ENCODE measurements at regions of chr19 and their contacts with region 1.

Region 1: DNA sequence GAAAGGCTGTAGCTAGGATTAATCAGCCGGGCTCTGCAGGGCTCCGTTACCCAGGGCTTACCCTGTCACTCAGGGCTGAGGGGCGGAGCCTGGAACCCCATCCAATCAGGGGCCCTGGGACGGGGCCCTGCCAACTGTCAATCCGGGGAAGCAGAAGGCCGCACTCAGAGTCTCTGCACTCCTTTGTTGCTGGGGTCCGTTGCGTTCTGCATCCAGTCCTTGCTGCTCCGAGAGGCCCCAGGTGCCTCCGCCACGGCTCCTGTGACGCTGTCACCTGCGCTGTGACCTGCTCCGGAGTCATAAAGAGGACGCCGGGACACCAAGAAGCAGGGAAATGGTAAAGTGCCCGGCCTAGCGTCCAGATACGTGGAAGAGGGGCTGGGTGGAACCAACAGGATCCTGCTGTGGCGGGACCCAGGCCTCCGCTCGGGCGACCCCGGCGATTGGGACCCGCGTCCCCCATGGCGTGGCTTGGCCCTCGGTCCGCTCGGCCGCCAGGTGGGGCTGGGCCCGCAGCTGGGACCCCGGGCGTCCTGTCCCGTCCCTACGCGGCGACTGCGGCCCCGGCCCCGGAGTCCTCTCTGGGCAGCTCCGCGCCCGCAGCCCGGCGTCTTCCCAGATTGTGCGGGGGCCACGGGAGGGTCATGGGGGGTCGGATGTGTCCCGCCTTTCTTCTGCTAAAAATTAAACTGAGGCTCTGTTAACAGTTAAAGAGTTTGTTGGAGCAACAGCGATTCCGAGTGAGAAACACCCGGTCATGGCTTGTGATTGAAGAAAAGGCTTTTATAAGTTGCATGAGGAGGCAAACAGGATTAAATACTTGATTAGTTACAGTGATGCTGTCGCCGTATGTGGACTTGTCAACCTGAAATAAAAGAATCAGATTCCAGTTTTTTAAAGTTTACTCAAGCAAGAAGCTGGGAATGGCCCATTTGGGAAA is at the start of gene ZNF491:
- DNase-seq: peak; percentile 79 to 86
- ATAC-seq: peak; percentile 92 to 95
- H3K4me3 ChIP-seq: peak within 1 kb of the TSS; percentile 58 to 74 (median 70)
- H3K27ac ChIP-seq: peak within 1 kb of the TSS; percentile 74 to 84 (median 78)
- H3K4me1 ChIP-seq: peaks cover 16 to 17% of the 10 kb centered on the region in 2 donors
- H3K27me3 ChIP-seq: no peaks in the 10 kb centered on the region
- CTCF ChIP-seq: peak in 2 of 5 experiments; percentile 22 to 24
- POLR2A ChIP-seq: peak; percentile 53 to 79
- total RNA-seq, gene ZNF491: 0.92 to 1.8 (median 1.4) TPM

Region 2: GRCh38 chr19:11814029-11814699 is 15.5 kb after region 1 on chr19 and contains the start of gene ZNF440:
- in situ Hi-C with region 1: no loop called
- intact Hi-C with region 1: loop called (anchors 1 kb)
- DNase-seq: peak; percentile 91 to 93
- ATAC-seq: peak; percentile 99
- H3K4me3 ChIP-seq: peak within 1 kb of the TSS; percentile 76 to 97 (median 81)
- H3K27ac ChIP-seq: peak within 1 kb of the TSS; percentile 80 to 96 (median 88)
- H3K4me1 ChIP-seq: peaks cover 7 to 10% of the 10 kb centered on the region in 2 donors
- H3K27me3 ChIP-seq: no peaks in the 10 kb centered on the region
- CTCF ChIP-seq: peak in 1 of 5 experiments; percentile 15
- POLR2A ChIP-seq: peak; percentile 71 to 89
- total RNA-seq, gene ZNF440: 2.5 to 5.5 (median 4.2) TPM

Region 3: GRCh38 chr19:11868188-11868587 is 69.5 kb after region 1 on chr19:
- in situ Hi-C with region 1: no loop called
- intact Hi-C with region 1: no loop called
- DNase-seq: no peak
- ATAC-seq: no peak
- H3K4me3 ChIP-seq: no peak overlapping the region
- H3K27ac ChIP-seq: no peak overlapping the region
- H3K4me1 ChIP-seq: no peaks in the 10 kb centered on the region
- H3K27me3 ChIP-seq: no peaks in the 10 kb centered on the region
- CTCF ChIP-seq: no peak
- POLR2A ChIP-seq: no peak

Region 4: DNA sequence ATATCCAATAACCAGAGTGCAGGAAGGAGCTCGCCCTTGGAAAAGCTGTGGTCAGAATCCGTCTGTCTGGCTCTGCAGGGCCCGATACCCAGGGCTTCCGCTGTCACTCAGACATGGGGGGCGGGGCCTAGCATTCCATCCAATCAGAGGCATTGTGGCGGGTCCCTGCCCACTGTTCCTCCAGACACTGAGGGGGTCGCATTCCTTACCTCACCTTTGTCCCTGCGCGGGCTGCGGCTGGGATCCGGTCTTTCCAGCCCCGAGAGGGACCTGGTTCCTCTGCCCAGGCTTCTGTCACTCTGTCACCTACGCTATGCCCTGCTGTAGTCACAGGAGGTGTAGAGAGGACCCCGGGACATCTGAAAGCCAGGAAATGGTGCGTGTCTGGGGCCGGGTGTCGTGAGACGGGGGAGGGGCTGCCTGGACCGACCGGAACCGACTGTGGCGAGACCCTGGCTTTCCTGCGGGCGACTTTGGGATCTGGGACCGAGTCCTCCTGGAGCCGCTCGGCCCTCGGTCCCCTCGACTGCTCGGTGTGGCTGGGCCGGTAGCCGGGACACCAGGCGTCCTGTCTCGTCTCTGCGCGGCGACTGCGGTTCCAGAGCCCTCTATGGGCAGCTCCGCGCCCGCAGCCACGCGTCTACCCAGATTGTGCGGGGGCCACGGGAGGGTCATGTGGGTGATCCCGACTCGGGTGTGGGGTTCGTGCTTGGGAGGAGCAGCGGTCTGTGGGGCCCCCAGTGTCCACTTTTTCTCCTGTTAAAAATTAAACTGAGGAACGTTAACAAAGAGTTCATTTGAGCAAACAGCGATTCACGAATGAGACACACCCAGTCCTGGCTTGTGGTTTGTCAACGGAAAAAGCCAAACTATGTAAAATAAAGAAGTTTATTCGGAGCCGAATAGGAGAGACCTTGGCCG is 89.2 kb after region 1 on chr19 and contains the start of gene ZNF69:
- in situ Hi-C with region 1: no loop called
- intact Hi-C with region 1: loop called (anchors 5 kb)
- DNase-seq: peak; percentile 67 to 70
- ATAC-seq: peak; percentile 94 to 95
- H3K4me3 ChIP-seq: peak within 1 kb of the TSS; percentile 58 to 82 (median 76)
- H3K27ac ChIP-seq: peak within 1 kb of the TSS; percentile 75 to 82 (median 80)
- H3K4me1 ChIP-seq: peaks cover 8% of the 10 kb centered on the region in 2 donors
- H3K27me3 ChIP-seq: no peaks in the 10 kb centered on the region
- CTCF ChIP-seq: peak in 4 of 5 experiments; percentile 18 to 54 (median 34)
- POLR2A ChIP-seq: no peak
- total RNA-seq, gene ZNF69: 0.22 to 2.8 (median 1.8) TPM

Region 5: GRCh38 chr19:11987405-11988281 is 189.0 kb after region 1 on chr19:
- in situ Hi-C with region 1: loop called in 3 of 4 experiments (anchors 5 to 10 kb)
- intact Hi-C with region 1: loop called (anchors 1 kb)
- DNase-seq: peak; percentile 93 to 96
- ATAC-seq: peak; percentile 89 to 90
- H3K4me3 ChIP-seq: peak overlapping the region; percentile 73 to 94 (median 91)
- H3K27ac ChIP-seq: peak overlapping the region; percentile 87 to 96 (median 94)
- H3K4me1 ChIP-seq: peaks cover 0 to 6% of the 10 kb centered on the region in 2 donors
- H3K27me3 ChIP-seq: no peaks in the 10 kb centered on the region
- CTCF ChIP-seq: no peak
- POLR2A ChIP-seq: peak; percentile 74 to 83

Region 6: GRCh38 chr19:12064590-12065538 is 266.2 kb after region 1 on chr19 and contains the start of gene ZNF844:
- in situ Hi-C with region 1: no loop called
- intact Hi-C with region 1: loop called (anchors 5 kb)
- DNase-seq: peak; percentile 93 to 97
- ATAC-seq: peak; percentile 96 to 97
- H3K4me3 ChIP-seq: peak within 1 kb of the TSS; percentile 63 to 92 (median 82)
- H3K27ac ChIP-seq: peak within 1 kb of the TSS; percentile 85 to 97 (median 92)
- H3K4me1 ChIP-seq: peaks cover 0 to 4% of the 10 kb centered on the region in 2 donors
- H3K27me3 ChIP-seq: no peaks in the 10 kb centered on the region
- CTCF ChIP-seq: no peak
- POLR2A ChIP-seq: peak; percentile 80 to 95
- total RNA-seq, gene ZNF844: 2.2 to 5.7 (median 4.9) TPM

Region 7: GRCh38 chr19:12666265-12667048 is 867.8 kb after region 1 on chr19 and contains the starts of genes MAN2B1 and WDR83:
- in situ Hi-C with region 1: no loop called
- intact Hi-C with region 1: loop called (anchors 5 kb)
- DNase-seq: peak; percentile 37 to 71
- ATAC-seq: peak; percentile 73 to 77
- H3K4me3 ChIP-seq: peak within 1 kb of the TSS; percentile 89 to 99 (median 96)
- H3K27ac ChIP-seq: peak within 1 kb of the TSS; percentile 82 to 99 (median 98)
- H3K4me1 ChIP-seq: peaks cover 33 to 36% of the 10 kb centered on the region in 2 donors
- H3K27me3 ChIP-seq: no peaks in the 10 kb centered on the region
- CTCF ChIP-seq: no peak
- POLR2A ChIP-seq: peak in 1 of 2 donors; percentile 55
- total RNA-seq, gene MAN2B1: 18.0 to 34.2 (median 29.3) TPM
- total RNA-seq, gene WDR83: 2.2 to 8.4 (median 3.7) TPM

Measured in gastrocnemius medialis (tissue), 4 donors.